ENCODE measurements at regions of chr3 and their contacts with region 1.

Region 1: GRCh38 chr3:110526777-110527727 is 544.6 kb upstream of the NECTIN3 start:
- DNase-seq: peak; percentile 95
- ATAC-seq: peak; percentile 90
- H3K4me3 ChIP-seq: no peak overlapping the region
- H3K27ac ChIP-seq: peak overlapping the region; percentile 67
- H3K4me1 ChIP-seq: peaks cover 15% of the 10 kb centered on the region
- H3K27me3 ChIP-seq: no peaks in the 10 kb centered on the region
- CTCF ChIP-seq: no peak
- POLR2A ChIP-seq: no peak; the same call in 1 of the 2 replicates
- RAD21 ChIP-seq: no peak; the same call in 1 of the 2 replicates

Region 2: GRCh38 chr3:110106805-110107204 is 420.2 kb before region 1 on chr3:
- CTCF ChIA-PET with region 1: no interaction called
- POLR2A ChIA-PET with region 1: no interaction called
- dilution Hi-C with region 1: no loop called
- in situ Hi-C with region 1: no loop called
- intact Hi-C with region 1: no loop called
- DNase-seq: peak; percentile 66
- ATAC-seq: no peak; the same call in 1 of the 2 replicates
- H3K4me3 ChIP-seq: no peak overlapping the region
- H3K27ac ChIP-seq: no peak overlapping the region
- H3K4me1 ChIP-seq: no peaks in the 10 kb centered on the region
- H3K27me3 ChIP-seq: no peaks in the 10 kb centered on the region
- CTCF ChIP-seq: 0 out of 2 replicates have a peak, but pooled peaks have one; percentile 3
- POLR2A ChIP-seq: no peak
- RAD21 ChIP-seq: no peak

Region 3: GRCh38 chr3:111539351-111540331 is 1012.6 kb after region 1 on chr3:
- CTCF ChIA-PET with region 1: no interaction called
- POLR2A ChIA-PET with region 1: no interaction called
- dilution Hi-C with region 1: no loop called
- in situ Hi-C with region 1: no loop called
- intact Hi-C with region 1: loop called (anchors 5 kb)
- DNase-seq: peak; percentile 41
- ATAC-seq: peak; percentile 66
- H3K4me3 ChIP-seq: no peak overlapping the region
- H3K27ac ChIP-seq: no peak overlapping the region
- H3K4me1 ChIP-seq: peaks cover 7% of the 10 kb centered on the region
- H3K27me3 ChIP-seq: no peaks in the 10 kb centered on the region
- CTCF ChIP-seq: peak; percentile 57
- POLR2A ChIP-seq: no peak
- RAD21 ChIP-seq: peak; percentile 81

Measured in IMR-90 (cell line).